ENCODE measurements at regions of chr19 and their contacts with region 1.

Region 1: GRCh38 chr19:1324806-1325567 is 39.3 kb downstream of the EFNA2 start:
- DNase-seq: peak; percentile 65 to 78
- ATAC-seq: peak in 3 of 4 donors; percentile 34 to 79 (median 57)
- H3K4me3 ChIP-seq: peak overlapping the region; percentile 55
- H3K27ac ChIP-seq: no peak overlapping the region
- H3K4me1 ChIP-seq: peaks cover 10% of the 10 kb centered on the region
- H3K27me3 ChIP-seq: peaks cover 0 to 61% (median 13%) of the 10 kb centered on the region in 3 donors
- CTCF ChIP-seq: no peak

Region 2: GRCh38 chr19:1373534-1374249 is 48.7 kb after region 1 on chr19:
- intact Hi-C with region 1: loop called in 1 of 2 experiments (anchors 5 kb)
- DNase-seq: peak in 1 of 2 donors; percentile 72
- ATAC-seq: peak; percentile 25 to 48 (median 38)
- H3K4me3 ChIP-seq: no peak overlapping the region
- H3K27ac ChIP-seq: peak overlapping the region; percentile 41
- H3K4me1 ChIP-seq: no peaks in the 10 kb centered on the region
- H3K27me3 ChIP-seq: no peaks in the 10 kb centered on the region
- CTCF ChIP-seq: no peak

Region 3: GRCh38 chr19:1523412-1524291 is 198.7 kb after region 1 on chr19 and contains the start of gene PLK5:
- intact Hi-C with region 1: no loop called
- DNase-seq: no peak
- ATAC-seq: peak in 2 of 4 donors; percentile 47 to 56
- H3K4me3 ChIP-seq: peak within 1 kb of the TSS; percentile 42
- H3K27ac ChIP-seq: no peak within 1 kb of the TSS
- H3K4me1 ChIP-seq: no peaks in the 10 kb centered on the region
- H3K27me3 ChIP-seq: peaks cover 0 to 46% (median 14%) of the 10 kb centered on the region in 3 donors
- CTCF ChIP-seq: no peak
- total RNA-seq, gene PLK5: not detected